H1 (cell line): ENCODE measurements at regions of chr16 and their contacts with region 1.

Region 1: DNA sequence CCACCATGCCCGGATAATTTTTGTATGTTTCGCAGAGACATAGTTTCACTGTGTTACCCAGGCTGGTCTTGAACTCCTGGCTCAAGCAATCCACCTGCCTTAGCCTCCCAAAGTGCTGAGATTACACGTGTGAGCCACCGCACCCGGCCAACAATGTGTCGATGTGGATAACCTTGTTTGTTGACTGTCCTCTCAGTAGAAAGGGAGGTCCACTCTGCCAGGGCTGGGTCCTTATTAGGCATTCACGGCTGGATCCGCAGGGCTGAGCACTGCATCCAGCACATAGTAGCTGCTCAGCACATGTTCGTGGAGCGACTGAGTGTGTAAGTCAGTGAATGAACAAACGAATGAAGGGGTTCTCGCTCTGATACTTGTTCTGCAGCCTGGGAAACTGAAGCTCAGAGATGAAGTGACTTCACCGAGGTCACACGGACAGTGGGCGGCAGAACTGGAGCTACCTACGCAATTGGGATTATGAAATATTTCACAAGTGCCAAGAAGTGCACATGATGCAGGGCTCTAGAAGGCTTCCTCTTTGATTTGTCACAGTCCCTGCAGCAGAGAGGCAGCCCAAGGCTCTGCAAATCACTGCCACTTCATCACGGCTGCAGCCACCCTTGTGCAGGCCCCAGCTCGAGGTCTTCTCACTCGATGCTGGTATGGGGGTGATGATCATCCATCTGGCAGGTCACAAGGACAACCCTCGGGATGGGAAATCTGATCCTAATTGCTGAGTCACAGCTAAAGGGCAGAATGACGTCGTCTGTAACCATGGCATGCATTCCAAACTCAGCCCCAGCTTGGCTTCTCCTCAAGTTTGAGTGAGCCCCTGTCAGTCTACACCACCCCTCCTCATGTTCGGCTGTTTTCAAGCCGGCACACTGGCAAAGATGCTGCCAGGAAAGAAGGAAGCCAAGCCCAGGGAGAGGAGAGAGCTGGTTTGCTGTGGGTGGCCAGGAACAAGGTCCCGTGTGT is 28.0 kb upstream of the SNN start:
- DNase-seq: no peak
- H3K4me3 ChIP-seq: no peak overlapping the region
- H3K27ac ChIP-seq: peak overlapping the region; percentile 15; the same call in 1 of the 2 replicates
- H3K4me1 ChIP-seq: peaks cover 0 to 25% (median 19%) of the 10 kb centered on the region in 4 experiments; a peak in 6 of 7 replicates
- H3K27me3 ChIP-seq: no peaks in the 10 kb centered on the region
- CTCF ChIP-seq: peak in 1 of 3 experiments; percentile 2; a peak in 1 of 4 replicates
- EP300 ChIP-seq: no peak
- POLR2A ChIP-seq: no peak; a peak in 1 of 3 replicates
- RAD21 ChIP-seq: no peak

Region 2: DNA sequence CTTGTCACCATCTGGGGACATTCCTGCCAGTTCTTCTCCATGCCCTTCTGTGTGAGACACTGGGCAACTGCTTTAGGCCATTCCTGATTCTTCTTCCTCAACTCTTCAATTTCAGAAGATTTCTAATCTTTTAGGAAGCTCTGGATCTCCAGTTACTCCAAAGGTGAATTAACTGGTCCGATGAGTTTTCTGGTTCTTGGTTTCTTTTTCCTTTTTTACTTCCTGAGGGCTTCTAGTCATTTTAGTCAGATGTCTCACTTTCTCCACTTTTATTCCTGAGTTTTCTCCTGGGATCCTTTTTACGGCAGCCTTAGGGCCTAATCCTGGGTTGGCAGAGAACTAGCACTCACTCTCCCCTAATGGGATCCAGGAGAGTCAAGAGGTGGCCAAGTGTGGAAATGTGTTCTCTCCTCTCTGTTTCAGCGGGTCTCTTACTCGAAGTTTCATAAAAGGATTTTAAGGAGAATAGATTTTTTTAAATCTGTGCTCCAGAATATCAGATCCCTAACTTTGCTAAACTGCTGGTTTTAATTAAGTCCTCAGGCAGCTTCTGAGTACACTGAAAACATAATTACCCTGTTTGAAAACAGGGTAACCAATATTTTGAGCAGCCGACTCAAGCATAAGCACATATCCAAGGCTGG is 187.3 kb before region 1 on chr16:
- CTCF ChIA-PET with region 1: no interaction called
- POLR2A ChIA-PET with region 1: no interaction called
- DNase-seq: no peak
- H3K4me3 ChIP-seq: no peak overlapping the region
- H3K27ac ChIP-seq: no peak overlapping the region
- H3K4me1 ChIP-seq: no peaks in the 10 kb centered on the region
- H3K27me3 ChIP-seq: no peaks in the 10 kb centered on the region
- CTCF ChIP-seq: no peak
- EP300 ChIP-seq: no peak
- POLR2A ChIP-seq: no peak
- RAD21 ChIP-seq: no peak

Region 3: DNA sequence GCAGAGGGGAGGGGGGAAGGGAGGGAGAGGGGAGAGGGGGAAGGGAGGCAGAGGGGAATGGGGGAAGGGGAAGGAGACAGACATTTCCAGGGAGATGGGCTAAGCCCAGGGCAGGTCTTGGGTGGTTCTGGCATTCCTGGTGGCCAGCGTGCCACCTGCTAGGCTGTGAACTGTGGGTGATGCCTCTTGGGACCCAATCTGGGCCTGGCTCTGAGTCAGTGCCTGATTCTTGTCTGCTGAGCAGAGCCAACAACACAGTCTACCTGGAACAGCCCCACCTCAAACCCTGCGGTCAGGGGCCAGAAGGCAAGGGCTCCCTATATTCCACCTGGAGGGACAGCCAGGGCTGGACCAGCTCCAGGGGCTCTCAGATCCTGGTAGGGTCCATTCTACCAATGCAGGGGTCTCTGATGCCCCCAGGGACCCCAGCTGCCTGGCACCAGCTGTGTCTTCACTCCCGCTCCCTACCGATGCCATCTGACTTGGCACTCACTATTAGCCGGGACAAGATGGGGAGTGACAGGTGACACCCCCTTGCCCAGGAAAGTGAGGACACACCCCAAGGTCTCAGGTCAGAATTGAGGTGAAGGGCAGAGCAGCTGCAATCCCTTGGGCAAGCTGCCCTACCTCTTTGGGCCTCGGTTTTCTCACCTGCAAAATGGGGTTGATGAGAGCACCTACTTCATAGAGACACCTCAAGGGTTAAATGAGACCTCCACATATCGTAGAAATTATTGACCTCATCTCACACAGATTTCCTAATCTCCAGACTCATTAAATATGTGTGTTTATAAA is 140.7 kb before region 1 on chr16:
- CTCF ChIA-PET with region 1: interaction called, 4 read pairs
- POLR2A ChIA-PET with region 1: interaction called, 14 read pairs
- DNase-seq: peak in 1 of 2 experiments; percentile 52
- H3K4me3 ChIP-seq: no peak overlapping the region
- H3K27ac ChIP-seq: no peak overlapping the region
- H3K4me1 ChIP-seq: peaks cover 2 to 40% (median 29%) of the 10 kb centered on the region in 4 experiments
- H3K27me3 ChIP-seq: no peaks in the 10 kb centered on the region
- CTCF ChIP-seq: no peak
- EP300 ChIP-seq: no peak
- POLR2A ChIP-seq: no peak
- RAD21 ChIP-seq: no peak

Region 4: GRCh38 chr16:11563493-11564040 is 76.6 kb before region 1 on chr16:
- CTCF ChIA-PET with region 1: interaction called, 11 read pairs
- POLR2A ChIA-PET with region 1: interaction called, 3 read pairs
- DNase-seq: no peak
- H3K4me3 ChIP-seq: no peak overlapping the region
- H3K27ac ChIP-seq: no peak overlapping the region
- H3K4me1 ChIP-seq: peaks cover 3 to 14% (median 6%) of the 10 kb centered on the region in 4 experiments
- H3K27me3 ChIP-seq: no peaks in the 10 kb centered on the region
- CTCF ChIP-seq: no peak
- EP300 ChIP-seq: no peak
- POLR2A ChIP-seq: no peak
- RAD21 ChIP-seq: no peak

Region 5: GRCh38 chr16:11613381-11614303 is 26.6 kb before region 1 on chr16:
- CTCF ChIA-PET with region 1: interaction called, 8 read pairs
- POLR2A ChIA-PET with region 1: interaction called, 18 read pairs
- DNase-seq: no peak
- H3K4me3 ChIP-seq: no peak overlapping the region
- H3K27ac ChIP-seq: no peak overlapping the region
- H3K4me1 ChIP-seq: peaks cover 5 to 18% (median 12%) of the 10 kb centered on the region in 4 experiments
- H3K27me3 ChIP-seq: no peaks in the 10 kb centered on the region
- CTCF ChIP-seq: no peak
- EP300 ChIP-seq: no peak
- POLR2A ChIP-seq: no peak
- RAD21 ChIP-seq: no peak

Region 6: GRCh38 chr16:11651796-11652195 is 11.6 kb after region 1 on chr16:
- CTCF ChIA-PET with region 1: interaction called, 31 read pairs
- POLR2A ChIA-PET with region 1: interaction called, 5 read pairs
- DNase-seq: no peak
- H3K4me3 ChIP-seq: no peak overlapping the region
- H3K27ac ChIP-seq: no peak overlapping the region
- H3K4me1 ChIP-seq: no peaks in the 10 kb centered on the region
- H3K27me3 ChIP-seq: no peaks in the 10 kb centered on the region
- CTCF ChIP-seq: no peak
- EP300 ChIP-seq: no peak
- POLR2A ChIP-seq: no peak
- RAD21 ChIP-seq: no peak

Region 7: DNA sequence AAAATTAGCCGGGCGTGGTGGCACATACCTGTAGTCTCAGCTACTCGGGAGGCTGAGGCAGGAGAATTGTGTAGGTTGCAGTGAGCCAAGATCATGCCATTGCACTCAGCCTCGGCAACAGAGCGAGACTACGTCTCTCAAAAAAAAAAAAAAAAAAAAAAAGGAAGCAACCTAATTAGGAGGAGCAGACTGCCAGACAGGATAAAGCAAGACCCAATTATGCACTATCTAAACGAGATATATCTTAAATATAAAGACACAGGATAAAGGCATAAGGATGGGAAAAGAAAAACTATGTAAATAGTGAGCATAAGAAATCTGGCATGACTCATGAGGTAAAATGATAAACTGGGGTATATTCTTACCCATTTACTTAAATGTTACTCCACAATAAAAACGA is 97.5 kb after region 1 on chr16:
- CTCF ChIA-PET with region 1: no interaction called
- POLR2A ChIA-PET with region 1: no interaction called
- DNase-seq: no peak
- H3K4me3 ChIP-seq: no peak overlapping the region
- H3K27ac ChIP-seq: no peak overlapping the region
- H3K4me1 ChIP-seq: peaks cover 2 to 6% (median 3%) of the 10 kb centered on the region in 4 experiments; a peak in 2 of 7 replicates
- H3K27me3 ChIP-seq: no peaks in the 10 kb centered on the region
- CTCF ChIP-seq: no peak
- EP300 ChIP-seq: no peak
- POLR2A ChIP-seq: no peak
- RAD21 ChIP-seq: no peak